ENCODE measurements at regions of chr1 and their contacts with region 1.

Region 1: GRCh38 chr1:20172033-20172590 is 13.8 kb upstream of the UBXN10 start:
- DNase-seq: no peak
- H3K4me3 ChIP-seq: no peak overlapping the region
- H3K27ac ChIP-seq: no peak overlapping the region
- H3K4me1 ChIP-seq: peaks cover 0 to 5% (median 0%) of the 10 kb centered on the region in 4 experiments
- H3K27me3 ChIP-seq: peaks cover 0 to 5% (median 0%) of the 10 kb centered on the region in 5 experiments

Region 2: DNA sequence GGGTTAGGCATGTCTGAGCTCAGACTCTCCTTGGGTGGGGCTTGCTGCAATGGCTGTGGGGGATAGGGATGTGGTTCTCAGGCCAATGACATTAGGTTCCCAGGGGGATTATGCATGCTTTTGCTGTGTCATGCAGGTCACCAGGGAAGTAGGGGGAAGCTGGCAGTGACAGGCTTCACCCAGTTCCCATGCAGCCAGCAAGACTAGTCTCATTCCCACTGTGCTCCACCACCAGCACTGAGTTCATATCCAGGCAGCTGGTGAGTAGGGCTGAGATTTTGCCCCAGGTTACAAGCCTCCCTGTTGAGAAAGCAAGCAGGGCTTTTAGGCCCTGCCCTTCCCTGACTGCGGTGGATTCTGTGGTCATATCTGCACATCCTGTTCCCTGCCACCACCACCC is 134.2 kb before region 1 on chr1:
- CTCF ChIA-PET with region 1: no interaction called
- POLR2A ChIA-PET with region 1: no interaction called
- DNase-seq: no peak
- H3K4me3 ChIP-seq: no peak overlapping the region
- H3K27ac ChIP-seq: no peak overlapping the region
- H3K4me1 ChIP-seq: peaks cover 0 to 5% (median 2%) of the 10 kb centered on the region in 4 experiments
- H3K27me3 ChIP-seq: peaks cover 0 to 16% (median 8%) of the 10 kb centered on the region in 5 experiments

Region 3: DNA sequence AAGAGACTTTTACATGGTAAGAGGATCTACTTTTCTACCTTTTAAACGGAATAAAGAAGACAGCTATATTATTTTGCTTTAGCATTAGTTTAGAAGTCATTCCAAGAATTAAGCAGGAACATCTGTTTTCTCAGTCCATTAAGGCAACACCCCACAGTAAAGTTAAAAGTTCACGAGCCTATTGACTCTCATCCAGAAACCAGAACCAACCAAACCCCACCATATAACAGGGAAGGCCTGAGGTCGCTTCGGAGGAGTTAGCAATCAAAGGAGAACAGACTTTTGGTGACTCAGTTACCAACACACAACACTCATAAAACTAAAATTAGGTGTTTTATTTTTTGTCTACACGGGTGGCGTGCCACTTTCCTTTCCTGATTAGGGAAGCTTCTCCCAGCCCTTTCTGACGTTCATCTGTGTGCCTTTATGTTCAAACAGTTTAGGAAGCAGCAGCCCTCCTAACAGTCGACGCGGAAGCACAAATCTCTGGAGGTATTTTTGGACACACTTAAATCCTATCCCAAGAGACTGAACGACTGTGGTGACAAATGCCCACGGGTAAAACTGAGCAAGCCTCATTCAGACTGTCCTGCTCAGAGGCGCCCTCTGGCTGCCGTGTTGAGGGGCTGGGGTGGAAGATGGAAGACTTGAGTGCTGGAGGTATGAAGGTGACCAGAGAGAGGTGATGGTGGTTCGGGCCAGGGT is 22.8 kb after region 1 on chr1:
- CTCF ChIA-PET with region 1: interaction called, 11 read pairs
- POLR2A ChIA-PET with region 1: no interaction called
- DNase-seq: peak; percentile 52 to 76 (median 68)
- H3K4me3 ChIP-seq: no peak overlapping the region
- H3K27ac ChIP-seq: no peak overlapping the region
- H3K4me1 ChIP-seq: no peaks in the 10 kb centered on the region
- H3K27me3 ChIP-seq: peaks cover 0 to 77% (median 22%) of the 10 kb centered on the region in 5 experiments

Region 4: DNA sequence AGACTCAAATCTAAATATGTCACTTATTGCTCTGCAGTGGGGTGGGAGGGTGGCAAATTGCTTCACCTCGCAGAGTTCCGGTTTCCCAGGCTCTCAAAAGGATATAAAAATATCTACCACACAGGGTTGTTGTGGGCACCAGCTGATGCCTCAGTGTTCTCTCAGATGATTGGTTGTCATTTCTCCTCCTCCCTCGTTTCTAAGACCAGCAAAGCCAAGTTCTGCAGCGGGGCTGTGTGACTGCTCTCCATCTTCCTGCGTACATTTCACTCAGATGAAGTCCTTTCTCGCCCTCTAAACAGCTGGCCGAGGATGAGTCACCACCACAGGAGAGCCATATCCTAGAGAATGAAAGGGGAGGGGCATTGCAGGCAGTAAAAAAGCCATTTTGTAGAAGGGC is 83.6 kb after region 1 on chr1:
- CTCF ChIA-PET with region 1: no interaction called
- POLR2A ChIA-PET with region 1: no interaction called
- DNase-seq: peak in 1 of 3 donors; percentile 20
- H3K4me3 ChIP-seq: no peak overlapping the region
- H3K27ac ChIP-seq: no peak overlapping the region
- H3K4me1 ChIP-seq: no peaks in the 10 kb centered on the region
- H3K27me3 ChIP-seq: peaks cover 0 to 39% (median 2%) of the 10 kb centered on the region in 5 experiments